Activated T-helper 1 cell treated with anti-CD3 and anti-CD28 coated beads, Interleukin-12 subunit alpha, Interleukin-12 subunit beta, Interleukin-2, Interleukin-4 antibody, amounts not matched to agents 30 ng/mL and 10 ng/mL and 1 ng/mL, durations not matched to agents 14 hours and 24 hours and 36 hours (primary cell): ENCODE measurements at regions of chr1 and their contacts with region 1.

Region 1: GRCh38 chr1:228212966-228213844 is 5.4 kb downstream of the OBSCN start:
- DNase-seq: peak; percentile 80
- H3K4me3 Mint-ChIP-seq: peak overlapping the region; percentile 89
- H3K27ac Mint-ChIP-seq: peak overlapping the region; percentile 93
- H3K4me1 Mint-ChIP-seq: no peaks in the 10 kb centered on the region
- H3K27me3 Mint-ChIP-seq: peaks cover 4% of the 10 kb centered on the region

Region 2: DNA sequence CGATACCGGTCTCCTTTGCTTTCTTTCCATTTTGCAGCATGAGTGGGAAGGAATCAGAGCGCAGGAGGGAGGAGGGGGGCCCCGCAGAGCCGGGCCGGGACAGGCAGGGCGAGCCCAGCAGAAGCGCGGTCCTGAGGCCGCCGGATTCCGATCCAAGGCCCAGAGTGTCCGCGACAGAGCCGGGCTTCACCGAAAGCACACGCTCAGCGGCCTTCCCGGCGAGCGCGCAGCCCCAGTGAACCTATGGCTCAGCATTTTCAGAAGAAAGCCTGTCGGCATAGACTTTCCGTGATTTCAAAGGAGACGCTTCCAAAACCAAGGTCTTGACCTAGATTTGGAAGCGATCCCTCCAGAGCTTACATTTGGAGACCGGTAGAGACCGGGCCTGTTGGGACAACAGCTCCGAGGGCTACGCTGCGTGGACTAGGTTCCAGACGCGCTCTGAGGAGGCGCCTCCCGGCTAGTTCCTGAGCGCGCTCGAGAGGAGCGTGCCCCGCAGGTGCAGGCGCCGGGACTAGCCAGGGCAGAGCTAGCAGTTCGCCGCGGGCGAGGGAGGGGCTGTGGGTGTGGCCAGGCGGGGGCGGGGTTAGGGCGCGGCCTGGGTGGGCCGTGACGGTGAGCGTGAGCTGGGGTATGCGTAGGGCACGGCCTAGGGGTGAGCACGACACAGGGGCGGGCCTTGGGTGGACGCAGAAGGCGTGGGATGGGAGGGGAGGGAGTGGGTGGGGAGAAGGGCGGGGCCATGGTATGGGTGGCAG is 425.5 kb before region 1 on chr1:
- intact Hi-C with region 1: loop called (anchors 1 kb)
- DNase-seq: peak; percentile 86
- H3K4me3 Mint-ChIP-seq: peak overlapping the region; percentile 82
- H3K27ac Mint-ChIP-seq: peak overlapping the region; percentile 34
- H3K4me1 Mint-ChIP-seq: peaks cover 23% of the 10 kb centered on the region
- H3K27me3 Mint-ChIP-seq: peaks cover 9% of the 10 kb centered on the region

Region 3: DNA sequence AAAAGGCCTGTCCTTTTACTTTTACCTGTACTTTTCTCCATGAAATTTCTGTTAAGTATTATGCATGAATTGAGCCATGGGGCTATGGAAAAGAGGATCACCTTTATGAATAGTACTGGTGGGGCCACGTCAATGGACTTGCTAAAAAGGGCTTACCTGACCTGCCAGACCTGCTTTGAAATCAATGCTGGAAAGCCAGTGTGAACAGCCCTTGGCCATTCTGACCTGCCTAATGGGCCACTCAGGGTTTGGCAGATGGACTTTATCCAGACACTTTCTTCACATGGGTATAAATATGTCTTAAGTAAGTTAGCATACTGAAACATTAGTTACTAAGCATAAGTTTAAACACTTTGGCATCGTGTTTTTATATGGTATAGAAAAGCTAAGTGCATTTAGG is 81.4 kb before region 1 on chr1:
- intact Hi-C with region 1: loop called (anchors 1 kb)
- DNase-seq: no peak
- H3K4me3 Mint-ChIP-seq: no peak overlapping the region
- H3K27ac Mint-ChIP-seq: no peak overlapping the region
- H3K4me1 Mint-ChIP-seq: peaks cover 9% of the 10 kb centered on the region
- H3K27me3 Mint-ChIP-seq: peaks cover 24% of the 10 kb centered on the region

Region 4: DNA sequence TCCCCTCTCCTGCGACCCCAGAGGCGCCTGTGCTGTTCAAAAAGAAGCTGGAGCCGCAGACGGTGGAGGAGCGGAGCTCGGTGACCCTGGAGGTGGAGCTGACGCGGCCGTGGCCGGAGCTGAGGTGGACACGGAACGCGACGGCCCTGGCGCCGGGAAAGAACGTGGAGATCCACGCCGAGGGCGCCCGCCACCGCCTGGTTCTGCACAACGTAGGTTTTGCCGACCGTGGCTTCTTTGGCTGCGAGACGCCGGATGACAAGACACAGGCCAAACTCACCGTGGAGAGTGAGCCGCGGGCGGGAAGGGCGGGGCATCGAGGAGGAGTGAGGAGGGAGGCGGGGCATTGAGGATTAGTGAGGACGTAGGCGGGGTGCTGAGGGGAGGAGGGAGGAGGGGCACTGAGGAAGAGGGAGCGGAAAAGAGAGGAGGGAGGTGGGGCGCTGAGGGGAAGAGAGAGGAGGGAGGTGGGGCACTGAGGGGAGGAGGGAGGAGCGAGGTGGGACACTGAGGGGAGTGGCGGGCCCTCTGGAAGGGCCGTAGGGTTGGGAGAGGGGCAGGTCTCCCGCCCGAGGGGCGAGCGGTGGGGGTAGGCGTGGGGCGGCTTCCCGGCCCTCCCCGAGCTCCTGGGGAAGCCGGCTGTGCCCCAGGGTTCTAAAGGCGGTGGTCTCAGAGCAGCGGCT is 62.7 kb after region 1 on chr1:
- intact Hi-C with region 1: loop called (anchors 1 kb)
- DNase-seq: peak; percentile 83
- H3K4me3 Mint-ChIP-seq: peak overlapping the region; percentile 73
- H3K27ac Mint-ChIP-seq: no peak overlapping the region
- H3K4me1 Mint-ChIP-seq: peaks cover 8% of the 10 kb centered on the region
- H3K27me3 Mint-ChIP-seq: no peaks in the 10 kb centered on the region

Region 5: GRCh38 chr1:228340686-228341449 is 127.7 kb after region 1 on chr1:
- intact Hi-C with region 1: no loop called
- DNase-seq: no peak
- H3K4me3 Mint-ChIP-seq: no peak overlapping the region
- H3K27ac Mint-ChIP-seq: no peak overlapping the region
- H3K4me1 Mint-ChIP-seq: no peaks in the 10 kb centered on the region
- H3K27me3 Mint-ChIP-seq: no peaks in the 10 kb centered on the region

Region 6: GRCh38 chr1:228464487-228464983 is 251.3 kb after region 1 on chr1:
- intact Hi-C with region 1: loop called (anchors 1 kb)
- DNase-seq: peak; percentile 88
- H3K4me3 Mint-ChIP-seq: peak overlapping the region; percentile 85
- H3K27ac Mint-ChIP-seq: peak overlapping the region; percentile 88
- H3K4me1 Mint-ChIP-seq: peaks cover 61% of the 10 kb centered on the region
- H3K27me3 Mint-ChIP-seq: peaks cover 11% of the 10 kb centered on the region